H1 (cell line): ENCODE measurements at regions of chr1 and their contacts with region 1.

Region 1: GRCh38 chr1:225413708-225414375 is 14.0 kb downstream of the LBR start:
- DNase-seq: no peak
- H3K4me3 ChIP-seq: no peak overlapping the region
- H3K27ac ChIP-seq: no peak overlapping the region
- H3K4me1 ChIP-seq: no peaks in the 10 kb centered on the region; a peak in 1 of 7 replicates
- H3K27me3 ChIP-seq: no peaks in the 10 kb centered on the region
- CTCF ChIP-seq: no peak
- EP300 ChIP-seq: no peak
- POLR2A ChIP-seq: no peak
- RAD21 ChIP-seq: no peak

Region 2: GRCh38 chr1:225209153-225209552 is 204.7 kb before region 1 on chr1:
- CTCF ChIA-PET with region 1: no interaction called
- POLR2A ChIA-PET with region 1: no interaction called
- DNase-seq: no peak
- H3K4me3 ChIP-seq: no peak overlapping the region
- H3K27ac ChIP-seq: no peak overlapping the region
- H3K4me1 ChIP-seq: no peaks in the 10 kb centered on the region
- H3K27me3 ChIP-seq: no peaks in the 10 kb centered on the region
- CTCF ChIP-seq: no peak
- EP300 ChIP-seq: no peak
- POLR2A ChIP-seq: no peak
- RAD21 ChIP-seq: no peak

Region 3: GRCh38 chr1:225299624-225300023 is 114.2 kb before region 1 on chr1:
- CTCF ChIA-PET with region 1: no interaction called
- POLR2A ChIA-PET with region 1: no interaction called
- DNase-seq: no peak
- H3K4me3 ChIP-seq: no peak overlapping the region
- H3K27ac ChIP-seq: no peak overlapping the region
- H3K4me1 ChIP-seq: no peaks in the 10 kb centered on the region
- H3K27me3 ChIP-seq: no peaks in the 10 kb centered on the region
- CTCF ChIP-seq: no peak
- EP300 ChIP-seq: no peak
- POLR2A ChIP-seq: no peak
- RAD21 ChIP-seq: no peak

Region 4: GRCh38 chr1:225428068-225428880 is 14.4 kb after region 1 on chr1:
- CTCF ChIA-PET with region 1: interaction called, 17 read pairs
- POLR2A ChIA-PET with region 1: interaction called, 5 read pairs
- DNase-seq: peak; percentile 54 to 92
- H3K4me3 ChIP-seq: peak overlapping the region; percentile 63 to 91 (median 84)
- H3K27ac ChIP-seq: peak overlapping the region; percentile 70; the same call in 1 of the 2 replicates
- H3K4me1 ChIP-seq: peaks cover 3 to 13% (median 12%) of the 10 kb centered on the region in 4 experiments
- H3K27me3 ChIP-seq: peaks cover 0 to 3% (median 1%) of the 10 kb centered on the region in 4 experiments; a peak in 2 of 7 replicates
- CTCF ChIP-seq: no peak
- EP300 ChIP-seq: no peak
- POLR2A ChIP-seq: peak; percentile 65 to 76
- RAD21 ChIP-seq: no peak